Activated CD4-positive, alpha-beta T cell treated with anti-CD3 and anti-CD28 coated beads for 36 hours (primary cell): ENCODE measurements at regions of chr19 and their contacts with region 1.

Region 1: DNA sequence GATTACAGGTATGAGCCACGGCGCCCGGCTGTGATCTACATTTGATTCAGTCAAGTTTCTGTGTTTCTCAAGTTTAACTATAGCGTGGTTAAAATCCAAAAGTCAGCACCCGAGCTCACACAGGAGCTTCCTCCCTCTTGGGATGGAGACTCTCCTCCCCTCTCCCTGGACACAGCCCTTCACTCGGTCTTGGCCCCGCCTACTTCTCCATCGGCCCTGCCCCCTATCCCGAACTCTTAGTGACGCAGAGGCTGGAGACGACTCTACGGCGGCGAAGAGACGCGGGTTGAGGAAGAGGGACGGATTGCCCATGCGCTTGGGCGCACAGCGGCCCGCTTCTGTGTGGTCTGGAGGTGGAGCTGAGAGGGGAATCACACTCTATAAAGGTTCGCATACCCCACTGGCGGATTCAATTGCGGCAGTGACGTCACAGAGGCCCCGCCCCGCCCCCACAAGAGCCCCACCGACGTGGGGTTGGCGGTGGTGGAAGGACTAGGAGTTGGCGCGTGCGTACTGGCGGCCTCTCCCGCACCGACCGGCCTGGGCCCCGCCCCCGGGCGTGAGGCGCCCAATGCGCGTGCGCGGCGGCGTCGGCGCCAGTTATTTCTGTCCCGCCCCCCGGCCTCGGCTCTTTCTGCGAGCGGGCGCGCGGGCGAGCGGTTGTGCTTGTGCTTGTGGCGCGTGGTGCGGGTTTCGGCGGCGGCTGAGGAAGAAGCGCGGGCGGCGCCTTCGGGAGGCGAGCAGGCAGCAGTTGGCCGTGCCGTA is at the start of gene TRIM28:
- DNase-seq: peak; percentile 100
- ATAC-seq: peak; percentile 98
- H3K4me3 Mint-ChIP-seq: peak within 1 kb of the TSS; percentile 96
- H3K27ac Mint-ChIP-seq: peak within 1 kb of the TSS; percentile 97
- H3K4me1 Mint-ChIP-seq: peaks cover 34% of the 10 kb centered on the region
- H3K27me3 Mint-ChIP-seq: peaks cover 4% of the 10 kb centered on the region
- total RNA-seq, gene TRIM28: 481 to 758 TPM

Region 2: DNA sequence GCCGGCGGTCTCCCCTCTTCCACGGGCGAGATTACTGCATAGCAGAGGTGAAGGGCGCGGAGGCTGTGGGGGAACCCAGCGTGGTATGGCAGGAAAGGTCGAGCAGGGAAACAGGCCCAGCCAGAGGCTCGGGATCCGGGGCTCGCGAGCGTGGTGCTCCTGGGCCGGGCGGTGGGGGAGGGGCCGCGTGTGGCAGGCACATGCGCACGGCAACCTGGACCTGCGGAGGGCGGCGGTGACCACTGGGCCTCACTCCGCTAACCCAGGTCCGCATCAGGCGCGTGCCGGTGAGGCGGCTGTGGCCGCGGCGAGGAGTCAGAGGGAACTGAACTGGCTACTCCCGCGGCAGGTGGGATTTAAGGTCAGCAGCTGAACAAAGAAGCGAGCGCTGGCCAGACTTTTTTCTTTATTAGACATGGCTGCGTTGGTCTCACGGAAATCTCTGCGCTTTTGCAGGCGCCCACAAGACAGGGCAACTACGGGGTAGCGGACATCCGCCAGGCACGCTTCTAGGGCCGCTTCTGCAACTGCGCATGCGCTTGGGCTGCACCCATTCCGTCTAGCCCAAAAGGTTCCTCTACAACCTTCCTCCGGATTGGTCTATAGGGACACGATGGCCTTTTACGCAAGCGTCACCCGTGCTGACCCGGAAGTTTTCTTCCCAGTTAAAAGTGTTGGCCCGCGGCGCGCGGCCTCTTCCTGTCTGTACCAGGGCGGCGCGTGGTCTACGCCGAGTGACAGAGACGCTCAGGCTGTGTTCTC is 157.3 kb before region 1 on chr19 and contains the start of gene RPS5:
- CTCF ChIA-PET with region 1: no interaction called
- POLR2A ChIA-PET with region 1: interaction called, 10 read pairs
- intact Hi-C with region 1: loop called in 1 of 2 experiments (anchors 1 kb)
- DNase-seq: peak; percentile 97
- ATAC-seq: peak; percentile 96
- H3K4me3 Mint-ChIP-seq: peak within 1 kb of the TSS; percentile 96
- H3K27ac Mint-ChIP-seq: peak within 1 kb of the TSS; percentile 97
- H3K4me1 Mint-ChIP-seq: peaks cover 33% of the 10 kb centered on the region
- H3K27me3 Mint-ChIP-seq: no peaks in the 10 kb centered on the region
- total RNA-seq, gene RPS5: 1,234 to 1,535 TPM

Region 3: DNA sequence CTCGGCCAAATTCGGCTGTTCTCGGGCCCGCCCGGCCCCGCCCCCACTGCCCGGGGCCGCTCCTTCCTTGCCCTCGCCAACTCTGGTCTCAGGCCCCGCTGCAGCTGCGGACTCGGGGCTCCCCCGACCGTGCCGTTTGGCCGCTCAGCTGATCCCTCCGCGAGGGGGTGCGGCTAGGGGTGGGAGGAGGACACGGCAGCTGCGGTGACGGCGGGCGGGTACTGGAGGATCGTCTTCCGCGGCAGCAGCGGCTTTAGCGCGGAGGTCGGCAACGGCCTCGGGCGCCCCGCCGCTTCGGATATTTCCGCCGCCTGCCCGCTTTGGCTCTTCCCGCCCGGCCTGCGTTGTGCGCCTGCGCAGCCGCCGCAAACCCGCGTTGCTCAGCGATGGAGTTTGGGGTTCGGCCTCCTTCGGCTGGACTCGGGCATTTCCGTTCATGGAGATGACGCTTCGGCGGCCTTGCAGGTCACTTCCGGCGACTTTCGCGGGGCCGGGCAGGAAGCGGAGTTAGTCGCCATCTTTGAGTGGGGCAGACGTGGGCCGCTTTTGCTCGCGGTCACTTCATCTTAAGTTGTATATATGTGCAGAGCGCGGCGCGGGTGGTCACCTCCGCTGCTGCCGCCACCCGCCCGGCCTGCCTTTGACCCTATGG is 14.7 kb after region 1 on chr19:
- CTCF ChIA-PET with region 1: interaction called, 6 read pairs
- POLR2A ChIA-PET with region 1: interaction called, 41 read pairs
- intact Hi-C with region 1: loop called (anchors 1 kb)
- DNase-seq: peak; percentile 100
- ATAC-seq: peak; percentile 69
- H3K4me3 Mint-ChIP-seq: peak overlapping the region; percentile 92
- H3K27ac Mint-ChIP-seq: peak overlapping the region; percentile 100
- H3K4me1 Mint-ChIP-seq: peaks cover 65% of the 10 kb centered on the region
- H3K27me3 Mint-ChIP-seq: no peaks in the 10 kb centered on the region